MCF 10A (cell line): ENCODE measurements at regions of chr4 and their contacts with region 1.

Region 1: DNA sequence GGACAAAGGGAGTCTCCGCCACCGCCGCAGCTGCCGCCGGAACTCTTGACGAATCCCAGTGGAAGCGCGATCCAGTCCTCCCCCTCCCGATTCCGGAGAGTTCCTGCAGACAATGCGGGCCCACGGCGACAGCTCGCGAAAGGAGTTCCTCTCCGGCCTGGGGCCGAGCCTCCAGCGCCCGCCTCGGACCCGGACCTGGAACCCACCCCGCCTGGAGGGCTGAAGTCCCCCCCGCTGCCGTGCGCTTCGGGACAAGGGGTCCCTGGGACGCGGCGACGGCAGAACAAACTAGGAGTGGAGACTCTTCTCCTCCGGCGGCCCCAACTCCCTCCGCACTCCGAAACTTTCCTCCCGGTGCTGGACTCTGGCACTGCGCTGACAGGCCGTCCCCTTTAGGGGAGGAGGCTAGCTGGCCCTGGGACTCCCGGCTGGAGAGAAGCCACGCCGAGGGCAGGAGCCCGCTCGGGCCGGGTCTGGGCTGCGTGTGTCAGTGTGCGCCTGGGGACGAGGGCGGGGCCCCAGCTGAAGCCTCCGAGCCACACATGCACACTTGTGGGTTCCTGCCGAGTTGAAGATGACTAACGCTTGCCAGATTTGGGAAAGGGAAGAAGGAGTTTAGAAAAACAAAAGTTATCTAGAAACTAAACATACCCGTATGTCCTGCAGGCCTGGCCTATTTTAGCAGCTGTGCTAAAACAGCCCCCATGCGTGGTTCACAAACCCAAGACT is at the start of gene ANTXR2:
- DNase-seq: peak; percentile 95
- H3K4me3 Mint-ChIP-seq: peak within 1 kb of the TSS; percentile 98
- H3K27ac Mint-ChIP-seq: peak within 1 kb of the TSS; percentile 92
- H3K4me1 Mint-ChIP-seq: peaks cover 34% of the 10 kb centered on the region
- H3K27me3 Mint-ChIP-seq: no peaks in the 10 kb centered on the region
- CTCF ChIP-seq: no peak
- total RNA-seq, gene ANTXR2: 31.0 and 45.1 TPM in 2 replicates

Region 2: DNA sequence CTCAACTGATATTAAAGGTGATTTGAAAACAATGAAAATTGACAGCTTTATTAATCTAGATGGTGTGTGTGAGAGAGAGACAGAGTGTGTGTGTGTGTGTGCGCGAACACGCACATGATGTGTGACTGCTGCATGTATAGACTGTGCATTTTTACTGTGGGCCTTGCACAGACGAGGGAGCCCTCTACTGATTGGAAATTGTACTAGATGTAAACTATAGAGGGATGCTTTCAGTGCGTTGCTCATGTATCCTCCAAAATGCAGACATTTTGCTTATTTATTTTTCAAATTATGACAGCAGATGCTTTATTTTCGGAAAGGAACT is 496.5 kb before region 1 on chr4:
- CTCF ChIA-PET with region 1: interaction called, 4 read pairs
- POLR2A ChIA-PET with region 1: no interaction called
- intact Hi-C with region 1: loop called (anchors 10 kb)
- DNase-seq: peak; percentile 51
- H3K4me3 Mint-ChIP-seq: no peak overlapping the region
- H3K27ac Mint-ChIP-seq: no peak overlapping the region
- H3K4me1 Mint-ChIP-seq: peaks cover 5% of the 10 kb centered on the region
- H3K27me3 Mint-ChIP-seq: peaks cover 12% of the 10 kb centered on the region
- CTCF ChIP-seq: peak; percentile 58

Region 3: GRCh38 chr4:80007745-80008149 is 65.2 kb before region 1 on chr4:
- CTCF ChIA-PET with region 1: no interaction called
- POLR2A ChIA-PET with region 1: interaction called, 3 read pairs
- intact Hi-C with region 1: loop called (anchors 5 kb)
- DNase-seq: no peak
- H3K4me3 Mint-ChIP-seq: no peak overlapping the region
- H3K27ac Mint-ChIP-seq: no peak overlapping the region
- H3K4me1 Mint-ChIP-seq: peaks cover 21% of the 10 kb centered on the region
- H3K27me3 Mint-ChIP-seq: no peaks in the 10 kb centered on the region
- CTCF ChIP-seq: no peak

Region 4: GRCh38 chr4:80097400-80098177 is 24.7 kb after region 1 on chr4:
- CTCF ChIA-PET with region 1: no interaction called
- POLR2A ChIA-PET with region 1: interaction called, 12 read pairs
- intact Hi-C with region 1: no loop called
- DNase-seq: peak; percentile 79
- H3K4me3 Mint-ChIP-seq: peak overlapping the region; percentile 41
- H3K27ac Mint-ChIP-seq: peak overlapping the region; percentile 69
- H3K4me1 Mint-ChIP-seq: peaks cover 33% of the 10 kb centered on the region
- H3K27me3 Mint-ChIP-seq: no peaks in the 10 kb centered on the region
- CTCF ChIP-seq: no peak

Region 5: DNA sequence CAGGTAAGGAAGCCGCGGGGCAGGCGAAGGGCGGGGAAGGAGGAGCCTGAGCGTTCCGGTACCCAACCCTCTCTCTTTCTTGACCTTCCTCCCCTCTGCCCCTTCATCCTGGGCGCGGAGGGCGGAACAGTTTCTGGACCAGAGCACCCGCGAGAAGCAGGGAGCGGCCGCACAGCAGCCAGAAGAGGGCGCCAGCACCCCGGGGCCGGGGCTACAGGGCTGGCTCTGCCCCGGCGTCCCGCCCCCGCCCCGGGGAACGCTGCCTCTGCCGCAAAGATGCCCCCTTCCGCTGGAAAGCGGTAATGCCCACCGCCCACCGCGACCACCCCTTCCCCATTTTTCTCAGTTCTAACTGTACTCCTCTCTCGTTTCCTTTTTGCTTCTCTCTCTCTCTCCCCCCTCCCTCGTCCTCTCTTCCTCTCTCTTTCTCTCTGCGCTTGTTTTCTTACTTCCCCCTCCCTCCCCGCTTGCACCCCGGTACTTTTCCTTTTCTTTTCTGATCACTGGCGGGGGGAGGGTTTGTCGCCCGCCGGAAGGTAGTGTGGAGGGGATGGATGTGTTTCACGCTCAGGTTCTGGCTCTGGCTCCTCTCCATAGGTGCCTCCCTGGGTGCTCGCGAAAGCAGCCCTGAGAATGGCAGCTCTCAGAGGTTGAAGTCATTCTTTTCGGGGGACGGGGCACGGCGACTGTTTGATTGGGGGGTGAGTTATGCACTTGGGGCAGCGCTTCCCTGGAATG is 111.3 kb after region 1 on chr4:
- CTCF ChIA-PET with region 1: interaction called, 10 read pairs
- POLR2A ChIA-PET with region 1: interaction called, 9 read pairs
- intact Hi-C with region 1: loop called (anchors 1 kb)
- DNase-seq: peak; percentile 85
- H3K4me3 Mint-ChIP-seq: peak overlapping the region; percentile 92
- H3K27ac Mint-ChIP-seq: peak overlapping the region; percentile 83
- H3K4me1 Mint-ChIP-seq: peaks cover 24% of the 10 kb centered on the region
- H3K27me3 Mint-ChIP-seq: no peaks in the 10 kb centered on the region
- CTCF ChIP-seq: peak; percentile 94